K562 (cell line): ENCODE measurements at regions of chr11 and their contacts with region 1.

Region 1: GRCh38 chr11:17978553-17979287 is 34.1 kb downstream of the SERGEF start:
- DNase-seq: peak; percentile 49 to 63 (median 52)
- ATAC-seq: peak; percentile 90
- H3K4me3 ChIP-seq: no peak overlapping the region
- H3K27ac ChIP-seq: no peak overlapping the region
- H3K4me1 ChIP-seq: no peaks in the 10 kb centered on the region
- H3K27me3 ChIP-seq: no peaks in the 10 kb centered on the region
- CTCF ChIP-seq: peak; percentile 70 to 78 (median 70)
- EP300 ChIP-seq: no peak
- POLR2A ChIP-seq: no peak
- RAD21 ChIP-seq: peak; percentile 59 to 67; a peak in 3 of 4 replicates

Region 2: DNA sequence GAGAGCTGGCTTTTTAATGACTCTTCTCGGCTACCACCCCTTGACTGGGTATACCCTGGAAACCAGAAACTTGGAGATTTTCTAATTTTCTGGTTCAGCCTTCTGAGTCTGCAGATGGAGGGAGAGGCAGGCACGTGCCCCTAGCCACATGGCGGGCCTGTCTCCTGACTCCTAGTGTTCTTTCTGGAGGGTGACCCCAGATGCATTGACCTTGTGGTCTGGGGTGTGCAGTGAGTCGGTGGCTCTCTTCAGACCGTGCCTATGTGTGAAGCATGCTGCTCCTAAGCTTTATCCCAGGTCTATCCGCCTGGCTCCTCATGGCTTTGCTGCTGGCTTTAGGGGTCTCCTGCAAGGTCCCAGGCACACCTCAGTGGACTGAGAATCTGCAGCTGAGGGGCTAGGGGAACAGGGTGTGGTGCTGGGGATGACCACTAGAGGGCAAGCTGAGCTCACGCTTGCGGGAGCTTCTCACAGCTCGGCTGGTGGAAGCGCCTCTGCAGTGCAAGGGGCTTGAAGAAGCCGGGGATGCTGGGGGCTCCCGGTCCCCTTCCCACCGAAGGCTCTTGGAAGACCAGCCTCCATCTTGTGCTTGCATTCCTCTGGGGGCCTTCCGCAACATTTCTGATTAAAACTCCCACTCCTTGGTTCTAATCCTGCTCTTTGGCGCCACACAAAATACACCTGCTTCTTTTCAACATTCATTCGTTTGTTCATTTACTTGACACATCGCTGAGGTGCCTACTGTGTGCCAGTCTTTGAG is 379.8 kb before region 1 on chr11:
- CTCF ChIA-PET with region 1: interaction called, 3 read pairs
- POLR2A ChIA-PET with region 1: no interaction called
- in situ Hi-C with region 1: loop called (anchors 5 kb)
- intact Hi-C with region 1: loop called (anchors 1 kb)
- DNase-seq: peak; percentile 67 to 78 (median 75)
- ATAC-seq: peak; percentile 96
- H3K4me3 ChIP-seq: no peak overlapping the region
- H3K27ac ChIP-seq: no peak overlapping the region
- H3K4me1 ChIP-seq: no peaks in the 10 kb centered on the region
- H3K27me3 ChIP-seq: peaks cover 0 to 16% of the 10 kb centered on the region in 2 experiments; a peak in 3 of 5 replicates
- CTCF ChIP-seq: peak; percentile 91 to 94 (median 94)
- EP300 ChIP-seq: no peak
- POLR2A ChIP-seq: no peak
- RAD21 ChIP-seq: peak; percentile 73 to 89

Region 3: GRCh38 chr11:17765356-17766072 is 213.2 kb before region 1 on chr11:
- CTCF ChIA-PET with region 1: interaction called, 42 read pairs
- POLR2A ChIA-PET with region 1: interaction called, 6 read pairs
- in situ Hi-C with region 1: loop called (anchors 5 kb)
- intact Hi-C with region 1: loop called (anchors 1 kb)
- DNase-seq: peak in 2 of 4 experiments; percentile 30 to 34
- ATAC-seq: no peak
- H3K4me3 ChIP-seq: no peak overlapping the region
- H3K27ac ChIP-seq: no peak overlapping the region
- H3K4me1 ChIP-seq: peaks cover 4 to 12% of the 10 kb centered on the region in 2 experiments; a peak in 3 of 5 replicates
- H3K27me3 ChIP-seq: peaks cover 0 to 26% of the 10 kb centered on the region in 2 experiments; a peak in 3 of 5 replicates
- CTCF ChIP-seq: no peak
- EP300 ChIP-seq: no peak
- POLR2A ChIP-seq: no peak
- RAD21 ChIP-seq: no peak

Region 4: GRCh38 chr11:18000760-18001159 is 22.0 kb after region 1 on chr11:
- CTCF ChIA-PET with region 1: no interaction called
- POLR2A ChIA-PET with region 1: no interaction called
- in situ Hi-C with region 1: no loop called
- intact Hi-C with region 1: no loop called
- DNase-seq: no peak
- ATAC-seq: no peak
- H3K4me3 ChIP-seq: no peak overlapping the region
- H3K27ac ChIP-seq: no peak overlapping the region
- H3K4me1 ChIP-seq: no peaks in the 10 kb centered on the region
- H3K27me3 ChIP-seq: no peaks in the 10 kb centered on the region
- CTCF ChIP-seq: no peak
- EP300 ChIP-seq: no peak
- POLR2A ChIP-seq: no peak
- RAD21 ChIP-seq: no peak

Region 5: GRCh38 chr11:18056561-18057181 is 78.0 kb after region 1 on chr11:
- CTCF ChIA-PET with region 1: no interaction called
- POLR2A ChIA-PET with region 1: no interaction called
- in situ Hi-C with region 1: no loop called
- intact Hi-C with region 1: no loop called
- DNase-seq: no peak
- ATAC-seq: no peak
- H3K4me3 ChIP-seq: no peak overlapping the region
- H3K27ac ChIP-seq: no peak overlapping the region
- H3K4me1 ChIP-seq: no peaks in the 10 kb centered on the region
- H3K27me3 ChIP-seq: no peaks in the 10 kb centered on the region; a peak in 1 of 5 replicates
- CTCF ChIP-seq: no peak
- EP300 ChIP-seq: no peak
- POLR2A ChIP-seq: no peak
- RAD21 ChIP-seq: no peak